PC-3 (cell line): ENCODE measurements at regions of chr5 and their contacts with region 1.

Region 1: DNA sequence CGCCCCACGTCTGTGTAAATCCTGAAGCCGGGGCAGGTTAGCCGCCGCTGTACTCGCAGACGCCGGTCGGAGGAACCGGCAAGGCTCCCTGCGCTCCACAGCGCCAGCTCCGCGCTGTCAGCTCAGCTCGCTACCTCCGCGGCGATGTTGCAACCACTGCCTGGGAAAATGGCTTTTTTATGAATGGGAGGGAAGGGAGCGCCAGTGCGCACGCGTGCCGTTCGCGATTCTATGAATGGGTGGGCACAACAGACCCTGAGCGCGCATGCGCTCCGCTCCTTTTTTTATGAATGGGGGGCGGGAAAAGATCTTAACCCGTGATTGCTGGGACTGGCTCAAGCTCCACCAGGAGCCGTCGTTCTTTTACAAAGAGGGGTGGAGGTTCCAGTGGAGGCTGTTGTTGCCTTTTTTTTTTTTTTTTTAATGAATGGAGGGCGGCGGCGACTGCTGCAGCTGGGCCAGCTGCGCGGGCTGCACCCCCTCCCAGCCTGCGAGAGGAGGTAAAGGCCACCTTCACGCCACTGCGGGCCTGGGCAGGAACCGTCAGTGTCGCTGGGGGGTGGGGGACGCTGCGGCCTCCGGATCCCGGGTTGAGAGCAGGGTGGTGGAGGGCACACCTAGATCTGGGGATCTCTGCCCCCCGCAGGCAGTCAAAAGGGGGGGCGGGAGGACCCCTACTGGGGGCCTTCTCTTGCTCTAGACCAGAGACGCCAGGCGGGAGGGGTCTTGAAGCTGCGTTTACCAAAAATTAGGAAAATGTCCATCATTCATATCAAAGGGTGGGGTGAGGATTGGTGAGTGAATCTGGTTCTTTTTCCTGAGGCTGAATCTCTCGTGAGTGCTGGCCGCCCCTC is at the start of gene SPRY4:
- DNase-seq: peak; percentile 97
- ATAC-seq: peak; percentile 36
- H3K4me3 ChIP-seq: peak within 1 kb of the TSS; percentile 89
- H3K27ac ChIP-seq: peak within 1 kb of the TSS; percentile 99
- H3K4me1 ChIP-seq: peaks cover 45% of the 10 kb centered on the region
- H3K27me3 ChIP-seq: no peaks in the 10 kb centered on the region
- CTCF ChIP-seq: 0 out of 2 replicates have a peak, but pooled peaks have one; percentile 1
- total RNA-seq, gene SPRY4: 32.1 and 38.4 TPM in 2 replicates

Region 2: GRCh38 chr5:142175039-142175438 is 150.1 kb before region 1 on chr5:
- CTCF ChIA-PET with region 1: no interaction called
- POLR2A ChIA-PET with region 1: no interaction called
- intact Hi-C with region 1: no loop called
- DNase-seq: no peak
- ATAC-seq: no peak
- H3K4me3 ChIP-seq: no peak overlapping the region
- H3K27ac ChIP-seq: no peak overlapping the region
- H3K4me1 ChIP-seq: no peaks in the 10 kb centered on the region
- H3K27me3 ChIP-seq: no peaks in the 10 kb centered on the region
- CTCF ChIP-seq: no peak

Region 3: DNA sequence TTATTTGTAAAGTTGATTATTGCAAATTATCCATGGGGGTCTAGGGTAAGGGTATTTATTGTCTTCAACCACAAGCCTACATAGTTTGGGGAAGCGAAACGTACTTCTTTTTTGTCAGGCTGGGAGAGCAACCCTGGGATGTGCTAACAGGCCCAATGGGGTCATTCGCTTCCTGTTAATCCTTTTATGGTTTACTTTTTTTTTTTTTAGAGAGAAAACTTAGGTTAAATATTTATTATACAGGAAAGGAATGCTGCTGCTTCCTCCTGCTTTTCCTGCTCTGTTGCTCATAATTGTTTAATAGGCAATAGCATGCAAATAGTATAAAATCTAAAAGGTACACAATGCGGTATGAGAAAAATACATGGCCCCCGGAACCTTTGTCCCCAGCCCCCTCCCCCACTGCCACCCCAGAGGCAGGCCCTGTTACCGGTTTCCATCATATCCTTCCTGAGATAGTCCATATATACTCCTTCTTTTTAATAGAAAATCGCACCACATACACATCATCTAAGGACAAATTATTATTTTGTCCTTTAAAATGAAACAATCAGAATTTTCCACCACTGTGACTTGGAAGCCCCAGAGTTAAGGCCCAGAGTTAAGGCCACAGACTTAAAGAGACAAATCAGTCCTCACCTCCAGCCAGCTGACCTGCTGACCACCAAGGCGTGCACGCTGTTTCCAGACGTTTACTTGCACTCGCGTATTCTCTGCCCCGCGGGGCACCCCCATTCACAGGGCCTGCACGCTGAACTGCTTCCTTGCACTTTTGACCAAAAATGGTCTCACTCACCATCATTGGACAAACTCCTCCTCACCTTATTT is 132.6 kb before region 1 on chr5:
- CTCF ChIA-PET with region 1: no interaction called
- POLR2A ChIA-PET with region 1: no interaction called
- intact Hi-C with region 1: loop called (anchors 1 kb)
- DNase-seq: peak; percentile 43
- ATAC-seq: peak; percentile 58
- H3K4me3 ChIP-seq: no peak overlapping the region
- H3K27ac ChIP-seq: peak overlapping the region; percentile 93
- H3K4me1 ChIP-seq: peaks cover 8% of the 10 kb centered on the region
- H3K27me3 ChIP-seq: no peaks in the 10 kb centered on the region
- CTCF ChIP-seq: no peak

Region 4: DNA sequence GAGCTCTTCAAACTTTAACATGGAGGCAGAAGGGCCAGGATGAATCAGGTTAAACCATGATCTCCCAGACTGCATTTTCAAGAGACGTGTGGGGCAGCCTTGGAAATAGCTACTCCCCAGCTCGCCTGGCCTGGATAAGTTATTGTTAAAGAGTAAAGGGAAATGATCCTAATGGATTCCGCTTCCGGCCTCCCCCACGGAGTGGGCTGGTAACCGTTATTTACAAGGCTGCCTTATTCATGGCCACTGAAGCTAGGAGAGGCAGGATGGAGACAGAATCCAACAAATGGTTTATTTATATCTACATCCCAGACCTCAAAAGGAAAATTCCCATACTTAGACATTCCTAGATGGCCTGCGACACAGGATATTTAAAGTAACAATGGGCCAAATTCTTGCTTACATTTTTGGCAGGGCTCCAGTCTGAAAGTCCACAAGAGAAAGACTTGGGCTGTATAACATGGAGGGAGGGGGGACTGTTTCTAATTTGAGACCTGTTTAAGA is 28.1 kb before region 1 on chr5:
- CTCF ChIA-PET with region 1: no interaction called
- POLR2A ChIA-PET with region 1: no interaction called
- intact Hi-C with region 1: no loop called
- DNase-seq: peak; percentile 3
- ATAC-seq: no peak; the same call in 1 of the 2 replicates
- H3K4me3 ChIP-seq: no peak overlapping the region
- H3K27ac ChIP-seq: no peak overlapping the region
- H3K4me1 ChIP-seq: 0 out of 2 replicates have a peak, but pooled peaks cover 9% of the 10 kb centered on the region
- H3K27me3 ChIP-seq: no peaks in the 10 kb centered on the region
- CTCF ChIP-seq: no peak

Region 5: GRCh38 chr5:142342128-142342981 is 17.3 kb after region 1 on chr5:
- CTCF ChIA-PET with region 1: no interaction called
- POLR2A ChIA-PET with region 1: no interaction called
- intact Hi-C with region 1: no loop called
- DNase-seq: peak; percentile 45
- ATAC-seq: peak; percentile 94
- H3K4me3 ChIP-seq: no peak overlapping the region
- H3K27ac ChIP-seq: peak overlapping the region; percentile 86
- H3K4me1 ChIP-seq: peaks cover 14% of the 10 kb centered on the region
- H3K27me3 ChIP-seq: no peaks in the 10 kb centered on the region
- CTCF ChIP-seq: no peak

Region 6: DNA sequence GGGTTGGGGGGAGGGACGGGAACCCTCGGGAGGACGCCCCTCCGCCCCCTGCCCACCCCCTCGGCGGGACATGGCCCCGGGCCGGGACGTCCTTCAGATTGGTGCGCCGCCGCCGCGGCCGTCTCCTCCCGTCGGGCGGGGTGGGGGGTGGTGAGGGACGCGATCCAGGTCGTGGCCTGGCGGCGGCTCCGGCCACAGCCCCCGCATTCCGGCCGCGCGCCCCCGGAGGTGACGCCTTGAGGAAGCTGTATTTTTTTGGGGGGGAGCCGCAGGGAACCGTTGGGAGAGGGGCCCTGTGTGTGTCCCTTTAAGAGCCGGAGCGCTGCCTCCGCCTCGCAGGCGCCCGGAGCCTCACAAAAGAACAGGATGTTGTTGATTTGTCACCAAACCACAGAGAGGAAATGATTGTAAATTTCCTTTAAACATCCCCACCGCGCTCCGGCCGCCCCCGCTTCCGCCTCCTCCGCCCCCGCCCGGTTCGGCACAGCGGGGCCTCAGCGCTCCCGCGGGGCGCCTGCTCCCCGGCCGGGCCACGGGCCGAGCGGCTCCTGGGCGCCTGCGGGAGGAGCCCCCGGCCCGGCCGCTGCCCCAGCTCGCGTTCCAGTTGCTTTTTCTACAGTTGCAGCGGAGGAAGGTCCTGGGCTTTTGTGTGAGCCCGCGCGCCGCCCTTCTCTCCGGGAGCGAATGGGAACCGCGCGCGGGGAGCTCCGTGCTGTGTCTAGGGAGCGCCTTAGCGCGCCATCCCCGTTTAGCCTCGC is 31.8 kb after region 1 on chr5:
- CTCF ChIA-PET with region 1: interaction called, 9 read pairs
- POLR2A ChIA-PET with region 1: interaction called, 16 read pairs
- intact Hi-C with region 1: loop called (anchors 1 kb)
- DNase-seq: peak; percentile 82
- ATAC-seq: peak; percentile 68
- H3K4me3 ChIP-seq: peak overlapping the region; percentile 75
- H3K27ac ChIP-seq: peak overlapping the region; percentile 63
- H3K4me1 ChIP-seq: peaks cover 23% of the 10 kb centered on the region
- H3K27me3 ChIP-seq: no peaks in the 10 kb centered on the region
- CTCF ChIP-seq: no peak

Region 7: GRCh38 chr5:142388696-142389095 is 63.6 kb after region 1 on chr5:
- CTCF ChIA-PET with region 1: no interaction called
- POLR2A ChIA-PET with region 1: no interaction called
- intact Hi-C with region 1: loop called (anchors 2 kb)
- DNase-seq: peak; percentile 69
- ATAC-seq: peak; percentile 65
- H3K4me3 ChIP-seq: no peak overlapping the region
- H3K27ac ChIP-seq: peak overlapping the region; percentile 74
- H3K4me1 ChIP-seq: peaks cover 24% of the 10 kb centered on the region
- H3K27me3 ChIP-seq: no peaks in the 10 kb centered on the region
- CTCF ChIP-seq: no peak

Region 8: DNA sequence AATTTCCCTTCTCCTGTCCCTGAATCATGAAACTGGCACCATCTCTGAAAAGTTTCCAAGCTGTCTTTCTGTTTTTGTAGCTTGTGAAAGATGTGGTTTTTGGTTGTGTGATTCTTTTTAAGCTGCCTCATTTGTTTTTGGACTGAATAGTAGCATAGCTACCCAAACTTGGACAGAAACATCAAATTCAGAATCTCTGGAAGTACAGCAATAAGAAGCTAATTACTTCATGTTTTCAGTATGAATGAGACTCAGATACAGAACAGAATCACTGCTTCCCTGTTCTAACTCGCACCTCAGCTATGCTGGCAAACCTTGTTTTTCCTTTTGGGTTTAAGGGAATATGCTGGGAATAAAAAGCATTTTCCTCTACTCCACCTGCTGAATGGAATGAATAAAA is 259.8 kb after region 1 on chr5:
- CTCF ChIA-PET with region 1: no interaction called
- POLR2A ChIA-PET with region 1: interaction called, 15 read pairs
- intact Hi-C with region 1: no loop called
- DNase-seq: no peak
- ATAC-seq: no peak
- H3K4me3 ChIP-seq: no peak overlapping the region
- H3K27ac ChIP-seq: no peak overlapping the region
- H3K4me1 ChIP-seq: no peaks in the 10 kb centered on the region
- H3K27me3 ChIP-seq: no peaks in the 10 kb centered on the region
- CTCF ChIP-seq: no peak